ENCODE measurements at regions of chr12 and their contacts with region 1.

Region 1: GRCh38 chr12:71780237-71780822 is 25.7 kb downstream of the RAB21 start:
- DNase-seq: peak; percentile 65
- ATAC-seq: peak; percentile 63
- H3K4me3 Mint-ChIP-seq: no peak overlapping the region
- H3K27ac Mint-ChIP-seq: peak overlapping the region; percentile 67
- H3K4me1 Mint-ChIP-seq: peaks cover 4% of the 10 kb centered on the region
- H3K27me3 Mint-ChIP-seq: no peaks in the 10 kb centered on the region

Region 2: DNA sequence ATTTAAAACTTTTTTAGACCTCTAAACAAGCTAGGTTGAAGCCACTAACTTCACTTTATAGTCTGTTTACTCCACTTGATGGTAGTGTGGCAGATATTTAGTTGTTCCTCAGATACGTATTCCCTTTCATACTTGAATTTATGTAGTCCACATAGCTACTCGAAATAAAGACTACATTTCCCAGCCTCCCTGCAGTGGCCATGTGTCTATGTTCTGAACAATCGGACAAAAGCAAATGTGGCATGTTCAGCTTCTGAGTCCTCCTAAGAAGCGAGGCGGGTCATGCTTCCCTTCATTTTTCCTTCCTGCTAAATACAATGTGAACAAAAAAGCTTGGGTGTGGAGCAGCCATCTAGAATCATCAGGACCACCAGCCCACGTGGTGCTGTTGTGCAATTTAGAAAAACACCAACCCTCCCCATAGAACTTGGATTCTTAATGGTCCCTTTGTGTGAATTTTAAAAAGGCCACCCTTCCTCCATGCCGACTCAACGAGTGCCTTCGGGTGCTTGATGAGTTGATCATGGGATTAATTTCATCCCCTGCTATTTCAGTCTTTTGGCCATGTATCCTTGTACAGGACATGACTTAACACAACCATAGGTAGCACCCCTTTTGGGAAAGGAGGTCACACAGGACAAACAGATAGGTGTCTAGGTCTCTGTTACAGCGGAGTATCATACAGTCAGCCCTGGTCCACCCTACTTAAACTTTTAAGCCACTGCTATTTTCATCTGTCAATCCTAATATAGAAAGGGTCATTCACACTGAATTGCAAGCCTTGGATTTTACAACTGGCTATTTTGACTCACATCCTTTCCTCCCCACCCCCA is 177.4 kb before region 1 on chr12:
- CTCF ChIA-PET with region 1: no interaction called
- POLR2A ChIA-PET with region 1: no interaction called
- intact Hi-C with region 1: no loop called
- DNase-seq: no peak
- ATAC-seq: no peak
- H3K4me3 Mint-ChIP-seq: no peak overlapping the region
- H3K27ac Mint-ChIP-seq: no peak overlapping the region
- H3K4me1 Mint-ChIP-seq: no peaks in the 10 kb centered on the region
- H3K27me3 Mint-ChIP-seq: no peaks in the 10 kb centered on the region

Region 3: DNA sequence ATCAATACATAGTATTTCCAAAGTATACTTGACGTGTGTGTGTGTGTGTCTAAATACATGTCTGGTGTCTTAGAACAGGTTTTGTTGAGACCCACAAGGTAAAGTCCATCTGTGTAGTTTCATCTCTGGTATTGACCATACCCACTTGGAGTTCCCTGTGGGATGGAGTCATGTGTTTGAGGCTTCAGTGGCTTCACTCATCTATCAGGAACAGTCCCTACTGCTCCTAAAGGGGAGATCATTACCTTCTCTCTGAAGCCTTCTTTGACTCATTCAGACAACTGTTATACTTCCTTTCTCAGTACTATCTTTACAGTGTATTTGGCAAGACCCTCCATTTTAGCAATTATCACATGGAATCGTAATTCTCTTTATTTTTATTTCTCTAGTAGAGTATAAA is 11.4 kb before region 1 on chr12:
- CTCF ChIA-PET with region 1: interaction called, 14 read pairs
- POLR2A ChIA-PET with region 1: no interaction called
- intact Hi-C with region 1: no loop called
- DNase-seq: no peak
- ATAC-seq: no peak
- H3K4me3 Mint-ChIP-seq: no peak overlapping the region
- H3K27ac Mint-ChIP-seq: peak overlapping the region; percentile 38
- H3K4me1 Mint-ChIP-seq: peaks cover 57% of the 10 kb centered on the region
- H3K27me3 Mint-ChIP-seq: no peaks in the 10 kb centered on the region

Region 4: DNA sequence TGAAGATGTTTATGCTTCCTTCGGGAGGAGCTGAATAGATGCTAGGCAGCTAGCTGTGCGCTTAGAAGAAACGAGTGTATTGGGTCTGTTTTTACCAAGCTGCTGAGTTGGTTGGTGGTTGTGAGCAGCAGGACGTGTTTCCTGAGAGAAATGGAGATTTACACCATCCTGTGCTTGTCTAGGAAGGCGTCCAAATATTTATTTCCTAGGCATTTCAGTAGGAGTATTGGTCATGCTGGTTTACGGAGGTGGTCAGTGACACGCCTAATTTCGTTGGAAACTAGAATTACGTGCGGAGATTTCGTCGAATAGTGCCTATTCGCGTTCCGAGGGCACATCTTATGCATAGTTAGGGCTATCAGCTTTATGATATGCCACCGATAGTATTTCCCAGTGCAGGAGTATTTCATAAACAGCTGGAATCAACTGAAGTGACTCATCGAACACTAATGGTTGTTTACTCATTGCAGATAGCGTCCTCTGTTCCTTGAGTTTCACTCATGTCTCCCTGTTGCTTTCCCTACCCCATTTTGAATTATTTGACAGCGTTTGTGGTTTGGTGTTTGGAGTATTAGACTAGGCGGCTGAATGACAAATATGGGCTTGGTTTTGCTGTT is 60.0 kb after region 1 on chr12:
- CTCF ChIA-PET with region 1: interaction called, 26 read pairs
- POLR2A ChIA-PET with region 1: interaction called, 7 read pairs
- intact Hi-C with region 1: no loop called
- DNase-seq: peak; percentile 16
- ATAC-seq: peak; percentile 28
- H3K4me3 Mint-ChIP-seq: peak overlapping the region; percentile 94
- H3K27ac Mint-ChIP-seq: peak overlapping the region; percentile 95
- H3K4me1 Mint-ChIP-seq: peaks cover 39% of the 10 kb centered on the region
- H3K27me3 Mint-ChIP-seq: no peaks in the 10 kb centered on the region

Region 5: DNA sequence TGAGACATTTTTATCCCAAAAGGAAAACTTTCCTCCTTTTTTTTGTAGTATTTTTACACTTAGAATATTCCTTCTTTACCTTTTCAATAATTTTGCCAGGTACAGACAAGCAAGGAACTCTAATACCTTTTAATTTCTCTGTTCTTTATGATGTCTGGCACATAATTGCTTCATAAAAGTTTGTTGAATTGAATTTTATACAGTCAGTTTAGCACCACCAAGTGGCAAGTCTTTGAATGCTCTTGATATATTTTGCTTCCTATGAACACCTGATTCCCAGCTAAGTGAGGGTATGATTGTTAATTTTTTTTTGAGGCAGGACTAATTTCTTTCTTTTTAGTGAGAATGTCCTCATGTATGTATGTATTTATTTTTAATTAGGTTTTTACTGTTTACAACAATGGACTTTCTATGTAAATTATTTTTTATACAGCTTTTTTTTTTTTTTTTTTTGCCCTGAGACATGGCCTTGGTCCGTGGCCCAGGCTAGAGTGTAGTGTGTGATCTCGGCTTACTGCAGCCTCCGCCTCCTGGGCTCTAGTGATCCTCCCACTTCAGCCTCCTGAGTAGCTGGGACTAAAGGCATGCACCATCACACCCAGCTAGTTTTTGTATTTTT is 66.1 kb after region 1 on chr12:
- CTCF ChIA-PET with region 1: interaction called, 26 read pairs
- POLR2A ChIA-PET with region 1: interaction called, 7 read pairs
- intact Hi-C with region 1: loop called (anchors 1 kb)
- DNase-seq: no peak
- ATAC-seq: peak; percentile 50
- H3K4me3 Mint-ChIP-seq: no peak overlapping the region
- H3K27ac Mint-ChIP-seq: no peak overlapping the region
- H3K4me1 Mint-ChIP-seq: peaks cover 28% of the 10 kb centered on the region
- H3K27me3 Mint-ChIP-seq: no peaks in the 10 kb centered on the region

Region 6: GRCh38 chr12:71938728-71939385 is 158.5 kb after region 1 on chr12 and contains the start of gene TPH2:
- CTCF ChIA-PET with region 1: interaction called, 12 read pairs
- POLR2A ChIA-PET with region 1: no interaction called
- intact Hi-C with region 1: loop called (anchors 1 to 10 kb)
- DNase-seq: peak; percentile 79
- ATAC-seq: peak; percentile 71
- H3K4me3 Mint-ChIP-seq: no peak within 1 kb of the TSS
- H3K27ac Mint-ChIP-seq: no peak within 1 kb of the TSS
- H3K4me1 Mint-ChIP-seq: peaks cover 6% of the 10 kb centered on the region
- H3K27me3 Mint-ChIP-seq: peaks cover 53% of the 10 kb centered on the region
- total RNA-seq, gene TPH2: not detected

Region 7: GRCh38 chr12:72219937-72220336 is 439.6 kb after region 1 on chr12:
- CTCF ChIA-PET with region 1: no interaction called
- POLR2A ChIA-PET with region 1: no interaction called
- intact Hi-C with region 1: no loop called
- DNase-seq: no peak
- ATAC-seq: no peak
- H3K4me3 Mint-ChIP-seq: no peak overlapping the region
- H3K27ac Mint-ChIP-seq: no peak overlapping the region
- H3K4me1 Mint-ChIP-seq: no peaks in the 10 kb centered on the region
- H3K27me3 Mint-ChIP-seq: no peaks in the 10 kb centered on the region

Measured in activated CD4-positive, alpha-beta T cell treated with anti-CD3 and anti-CD28 coated beads for 36 hours (primary cell).